ENCODE measurements at regions of chr7 and their contacts with region 1.

Region 1: GRCh38 chr7:139777948-139778841 is at the start of gene HIPK2:
- DNase-seq: peak; percentile 87 to 94 (median 93)
- ATAC-seq: peak; percentile 84 to 88
- H3K4me3 ChIP-seq: peak within 1 kb of the TSS; percentile 100
- H3K27ac ChIP-seq: peak within 1 kb of the TSS; percentile 99
- H3K4me1 ChIP-seq: peaks cover 3% of the 10 kb centered on the region
- H3K27me3 ChIP-seq: no peaks in the 10 kb centered on the region
- total RNA-seq, gene HIPK2: 92.6 to 131 (median 113) TPM

Region 2: GRCh38 chr7:139645572-139646523 is 132.3 kb before region 1 on chr7:
- intact Hi-C with region 1: loop called in 2 of 4 experiments (anchors 5 kb)
- DNase-seq: peak; percentile 83 to 89 (median 85)
- ATAC-seq: peak; percentile 47 to 69
- H3K4me3 ChIP-seq: no peak overlapping the region
- H3K27ac ChIP-seq: peak overlapping the region; percentile 13
- H3K4me1 ChIP-seq: peaks cover 10% of the 10 kb centered on the region
- H3K27me3 ChIP-seq: no peaks in the 10 kb centered on the region

Region 3: GRCh38 chr7:139658908-139659675 is 119.1 kb before region 1 on chr7:
- intact Hi-C with region 1: loop called in 1 of 4 experiments (anchors 5 kb)
- DNase-seq: no peak
- ATAC-seq: no peak
- H3K4me3 ChIP-seq: no peak overlapping the region
- H3K27ac ChIP-seq: peak overlapping the region; percentile 69
- H3K4me1 ChIP-seq: peaks cover 50% of the 10 kb centered on the region
- H3K27me3 ChIP-seq: no peaks in the 10 kb centered on the region

Region 4: DNA sequence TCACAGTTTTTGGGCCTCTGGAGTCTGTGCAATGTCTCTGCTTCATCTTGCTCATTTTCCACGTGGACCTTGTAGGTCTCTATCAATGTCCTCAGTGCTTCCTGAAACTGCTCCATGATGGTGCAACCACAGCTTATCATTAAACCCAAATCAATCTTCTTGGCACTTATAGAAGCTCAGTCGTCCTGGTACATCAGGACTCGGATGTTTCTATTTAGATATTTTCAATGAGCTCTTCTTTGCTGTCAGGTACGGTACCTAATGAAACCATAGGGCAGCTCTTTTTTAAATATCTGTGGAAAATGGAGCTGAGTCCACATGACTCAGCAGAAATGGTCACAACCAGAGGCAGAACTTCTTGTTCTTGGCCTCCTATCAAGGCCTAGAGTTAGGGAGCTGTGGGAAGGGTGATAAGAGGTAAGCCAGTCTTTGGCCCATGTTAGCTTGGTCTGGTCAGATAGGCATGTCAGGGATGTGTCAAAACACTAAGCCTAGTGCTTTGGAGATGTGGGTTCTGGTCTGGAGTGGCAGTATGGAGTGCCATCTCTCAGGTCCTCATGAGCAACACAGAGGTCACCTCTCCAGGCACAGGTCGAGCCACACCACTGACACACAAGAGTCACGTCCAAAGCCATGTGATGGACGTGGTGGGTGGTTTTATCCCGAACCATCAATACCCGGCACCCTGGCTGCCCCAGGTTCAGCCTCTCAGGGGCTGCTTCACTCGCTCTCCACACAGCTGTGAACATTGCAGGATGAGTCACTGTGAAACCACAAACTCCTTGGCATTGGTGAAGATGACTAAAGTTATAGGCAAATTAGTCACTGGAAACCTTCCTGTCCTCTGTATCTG is 137.9 kb after region 1 on chr7:
- intact Hi-C with region 1: loop called in 1 of 4 experiments (anchors 10 kb)
- DNase-seq: peak in 1 of 3 donors; percentile 46
- ATAC-seq: peak; percentile 81 to 83
- H3K4me3 ChIP-seq: no peak overlapping the region
- H3K27ac ChIP-seq: peak overlapping the region; percentile 52
- H3K4me1 ChIP-seq: peaks cover 14% of the 10 kb centered on the region
- H3K27me3 ChIP-seq: no peaks in the 10 kb centered on the region

Region 5: GRCh38 chr7:140096459-140096858 is 318.3 kb after region 1 on chr7:
- intact Hi-C with region 1: no loop called
- DNase-seq: no peak
- ATAC-seq: no peak
- H3K4me3 ChIP-seq: no peak overlapping the region
- H3K27ac ChIP-seq: no peak overlapping the region
- H3K4me1 ChIP-seq: no peaks in the 10 kb centered on the region
- H3K27me3 ChIP-seq: no peaks in the 10 kb centered on the region